ENCODE measurements at regions of chr9 and their contacts with region 1.

Region 1: GRCh38 chr9:6008169-6008979 is 7.0 kb downstream of the RANBP6 start:
- DNase-seq: peak; percentile 97
- H3K4me3 Mint-ChIP-seq: peak overlapping the region; percentile 83
- H3K27ac Mint-ChIP-seq: peak overlapping the region; percentile 84
- H3K4me1 Mint-ChIP-seq: peaks cover 47% of the 10 kb centered on the region
- H3K27me3 Mint-ChIP-seq: no peaks in the 10 kb centered on the region

Region 2: DNA sequence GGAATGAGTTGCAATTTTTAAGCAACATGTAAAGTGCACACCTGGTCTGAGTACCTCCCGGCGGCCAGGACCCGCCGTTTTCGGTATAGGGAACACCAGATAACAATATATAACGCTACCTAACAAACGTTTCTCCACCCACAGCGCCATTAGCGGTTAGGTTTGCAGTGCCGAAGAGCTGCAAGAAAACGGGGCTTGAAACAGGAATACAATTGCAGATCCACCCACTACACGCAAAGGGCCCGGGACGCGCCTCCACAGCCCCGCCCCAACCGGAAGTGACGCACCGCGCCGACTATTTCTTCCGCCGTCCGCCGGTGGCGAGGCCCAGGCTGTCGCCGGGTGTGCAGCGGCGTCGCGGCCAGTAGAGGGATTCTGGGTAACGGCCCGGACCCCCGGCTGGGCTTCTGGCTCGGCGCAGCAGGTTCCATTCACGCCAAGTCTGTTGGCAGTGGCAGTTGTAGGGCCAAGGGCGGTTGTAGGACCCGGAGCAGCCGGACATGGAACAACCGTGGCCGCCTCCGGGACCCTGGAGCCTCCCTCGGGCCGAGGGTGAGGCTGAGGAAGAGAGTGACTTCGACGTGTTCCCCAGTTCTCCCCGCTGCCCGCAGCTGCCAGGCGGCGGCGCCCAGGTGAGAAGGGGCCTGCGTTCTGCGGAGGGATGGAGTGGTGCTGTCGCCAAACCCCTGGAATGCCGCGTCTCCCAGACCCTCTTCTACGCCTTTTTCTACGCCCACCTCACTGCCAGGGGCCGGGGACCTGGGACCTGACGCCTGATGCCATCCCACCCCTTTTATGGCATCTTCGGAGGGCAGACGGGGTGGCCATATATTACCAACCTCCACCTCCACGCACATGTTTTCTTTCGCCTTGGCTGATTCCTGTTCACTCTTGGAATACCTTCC is 1328.9 kb before region 1 on chr9 and contains the start of gene CDC37L1:
- intact Hi-C with region 1: loop called (anchors 2 kb)
- DNase-seq: peak; percentile 100
- H3K4me3 Mint-ChIP-seq: no peak within 1 kb of the TSS
- H3K27ac Mint-ChIP-seq: no peak within 1 kb of the TSS
- H3K4me1 Mint-ChIP-seq: peaks cover 7% of the 10 kb centered on the region
- H3K27me3 Mint-ChIP-seq: no peaks in the 10 kb centered on the region
- total RNA-seq, gene CDC37L1: 11.3 and 12.1 TPM in 2 replicates

Region 3: DNA sequence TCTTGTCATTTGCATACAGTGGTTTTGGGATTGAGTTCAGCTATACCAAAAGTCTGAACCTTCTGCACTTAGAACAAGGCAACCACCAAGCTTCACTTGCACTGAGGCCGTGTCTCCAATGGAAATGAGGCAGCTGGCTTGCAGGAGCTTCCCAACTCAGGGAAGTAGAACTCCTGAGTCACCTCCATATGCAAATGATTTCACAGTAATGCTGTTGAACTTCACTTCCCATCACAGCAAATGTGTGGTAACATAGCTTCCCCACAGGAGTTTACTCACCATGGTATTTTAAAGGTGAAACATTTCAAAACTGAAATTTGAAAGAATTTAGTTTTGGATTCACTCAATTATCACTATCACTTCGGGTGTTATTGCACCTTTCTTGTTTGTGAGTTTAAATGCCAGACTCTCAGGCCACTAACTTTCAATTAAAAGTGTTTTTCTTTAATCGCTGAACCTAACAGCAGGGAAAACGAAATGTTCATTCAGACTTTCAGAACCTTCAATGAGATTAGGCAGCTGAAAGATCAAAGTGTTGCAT is 549.0 kb before region 1 on chr9:
- intact Hi-C with region 1: loop called (anchors 5 kb)
- DNase-seq: peak; percentile 75
- H3K4me3 Mint-ChIP-seq: peak overlapping the region; percentile 81
- H3K27ac Mint-ChIP-seq: peak overlapping the region; percentile 85
- H3K4me1 Mint-ChIP-seq: peaks cover 58% of the 10 kb centered on the region
- H3K27me3 Mint-ChIP-seq: no peaks in the 10 kb centered on the region

Region 4: DNA sequence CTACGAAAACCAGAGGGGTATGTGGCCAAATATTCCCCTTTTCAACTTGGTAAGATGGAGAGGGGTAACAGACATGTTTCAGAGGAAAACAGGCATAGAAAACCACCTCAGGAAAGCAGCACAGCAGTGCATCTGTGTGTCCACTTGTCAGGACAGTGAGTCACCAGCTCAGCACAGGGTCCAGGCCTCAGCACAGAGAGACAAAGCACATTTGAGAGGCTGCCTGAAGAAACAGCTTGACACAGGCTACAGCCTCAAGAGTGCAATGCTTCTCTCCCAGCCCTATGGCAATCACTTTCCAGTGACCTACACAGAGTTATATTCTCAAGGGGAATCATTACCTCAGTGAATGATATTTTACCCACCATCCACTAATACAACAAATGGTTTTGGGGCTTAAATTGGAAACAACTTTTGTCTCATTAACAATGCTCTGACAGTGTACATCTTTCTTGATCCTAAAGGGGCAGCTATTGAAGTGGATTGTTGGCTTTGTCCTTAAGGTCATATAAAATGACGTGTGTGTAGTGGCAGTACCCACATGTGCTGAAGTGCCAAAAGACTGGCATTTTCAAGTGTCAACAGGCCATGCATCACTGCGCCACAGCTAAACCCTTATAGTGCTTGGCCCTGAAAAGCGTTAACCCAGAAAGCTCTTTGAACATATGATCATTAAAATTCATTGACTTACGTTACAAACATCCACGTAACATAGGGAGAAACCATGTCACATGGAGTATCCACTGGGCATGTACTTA is 221.8 kb before region 1 on chr9:
- intact Hi-C with region 1: loop called (anchors 5 kb)
- DNase-seq: no peak
- H3K4me3 Mint-ChIP-seq: no peak overlapping the region
- H3K27ac Mint-ChIP-seq: peak overlapping the region; percentile 6
- H3K4me1 Mint-ChIP-seq: peaks cover 30% of the 10 kb centered on the region
- H3K27me3 Mint-ChIP-seq: no peaks in the 10 kb centered on the region

Region 5: DNA sequence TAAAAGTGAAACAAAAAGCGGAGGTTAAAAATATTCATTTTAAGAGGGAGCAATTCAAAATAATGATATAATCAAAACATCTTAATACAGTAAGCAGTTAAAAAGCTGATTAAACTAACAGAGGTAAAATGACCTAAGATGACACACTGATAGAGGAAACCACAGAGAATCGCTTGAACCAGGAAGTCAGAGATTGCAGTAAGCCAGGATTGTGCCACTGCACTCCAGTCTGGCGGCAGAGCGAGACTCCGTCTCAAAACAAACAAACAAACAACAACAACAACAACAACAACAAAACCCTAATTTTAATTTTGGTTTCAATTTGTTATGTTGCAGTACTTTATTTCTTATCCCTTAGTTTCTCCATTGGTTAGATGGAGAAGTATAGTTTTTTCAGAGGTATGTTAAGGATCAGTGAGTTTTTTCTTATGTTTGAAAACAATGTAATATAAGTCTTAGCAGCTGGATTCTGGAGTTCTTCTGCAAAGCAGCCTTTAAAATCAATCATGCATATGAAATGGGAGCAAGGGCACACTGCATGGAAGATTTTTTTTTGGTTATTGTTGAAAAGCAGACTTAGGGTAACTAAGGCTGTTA is 59.2 kb before region 1 on chr9:
- intact Hi-C with region 1: loop called (anchors 5 kb)
- DNase-seq: peak; percentile 72
- H3K4me3 Mint-ChIP-seq: peak overlapping the region; percentile 54
- H3K27ac Mint-ChIP-seq: no peak overlapping the region
- H3K4me1 Mint-ChIP-seq: peaks cover 14% of the 10 kb centered on the region
- H3K27me3 Mint-ChIP-seq: no peaks in the 10 kb centered on the region

Region 6: GRCh38 chr9:6412487-6413364 is 404.4 kb after region 1 on chr9 and contains the start of gene UHRF2:
- intact Hi-C with region 1: loop called (anchors 1 kb)
- DNase-seq: peak; percentile 99
- H3K4me3 Mint-ChIP-seq: peak within 1 kb of the TSS; percentile 88
- H3K27ac Mint-ChIP-seq: peak within 1 kb of the TSS; percentile 97
- H3K4me1 Mint-ChIP-seq: peaks cover 27% of the 10 kb centered on the region
- H3K27me3 Mint-ChIP-seq: peaks cover 4% of the 10 kb centered on the region
- total RNA-seq, gene UHRF2: 61.9 and 71.6 TPM in 2 replicates

Region 7: DNA sequence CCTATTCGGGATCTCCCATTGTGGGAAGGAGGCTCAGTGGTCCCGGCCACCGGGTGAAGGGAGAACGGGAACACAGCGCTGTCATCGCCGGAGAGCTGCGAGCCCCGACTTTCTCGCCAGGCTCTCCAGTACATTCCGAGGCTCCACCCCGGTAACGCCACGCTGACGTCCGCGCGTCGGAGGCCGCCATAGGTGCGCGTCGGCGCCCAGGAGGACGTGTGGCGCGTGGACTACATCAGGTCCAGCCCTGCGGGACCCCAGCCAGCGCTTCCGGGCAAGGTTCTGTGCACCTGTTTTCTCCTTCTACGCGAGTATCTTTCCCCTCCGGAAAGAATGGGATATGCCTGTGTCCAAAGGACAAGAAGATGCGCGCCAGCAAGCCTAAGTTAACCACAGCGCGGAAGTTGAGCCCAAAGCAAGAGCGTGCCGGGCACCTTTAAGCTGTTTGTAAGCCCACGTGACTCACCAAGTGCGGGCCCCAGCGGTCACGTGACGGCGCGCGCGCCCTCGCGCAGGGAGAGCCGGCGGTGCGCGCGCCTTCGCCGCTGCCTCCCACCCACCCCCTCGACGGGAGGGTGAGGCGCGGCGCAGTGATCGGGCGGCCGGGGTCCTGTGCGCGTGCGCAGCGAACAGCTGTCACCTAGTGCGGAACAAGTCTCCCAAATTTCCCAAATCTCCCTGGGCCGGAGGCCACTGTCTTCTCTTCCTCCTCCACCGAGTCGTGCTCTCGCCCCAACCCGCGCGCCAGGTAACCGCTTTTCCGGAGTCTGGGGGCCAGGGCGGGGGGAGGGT is 749.3 kb after region 1 on chr9 and contains the start of gene KDM4C:
- intact Hi-C with region 1: loop called (anchors 2 kb)
- DNase-seq: peak; percentile 98
- H3K4me3 Mint-ChIP-seq: peak within 1 kb of the TSS; percentile 97
- H3K27ac Mint-ChIP-seq: peak within 1 kb of the TSS; percentile 99
- H3K4me1 Mint-ChIP-seq: peaks cover 23% of the 10 kb centered on the region
- H3K27me3 Mint-ChIP-seq: no peaks in the 10 kb centered on the region
- total RNA-seq, gene KDM4C: 36.4 and 39.8 TPM in 2 replicates